ENCODE measurements at regions of chr4 and their contacts with region 1.

Region 1: DNA sequence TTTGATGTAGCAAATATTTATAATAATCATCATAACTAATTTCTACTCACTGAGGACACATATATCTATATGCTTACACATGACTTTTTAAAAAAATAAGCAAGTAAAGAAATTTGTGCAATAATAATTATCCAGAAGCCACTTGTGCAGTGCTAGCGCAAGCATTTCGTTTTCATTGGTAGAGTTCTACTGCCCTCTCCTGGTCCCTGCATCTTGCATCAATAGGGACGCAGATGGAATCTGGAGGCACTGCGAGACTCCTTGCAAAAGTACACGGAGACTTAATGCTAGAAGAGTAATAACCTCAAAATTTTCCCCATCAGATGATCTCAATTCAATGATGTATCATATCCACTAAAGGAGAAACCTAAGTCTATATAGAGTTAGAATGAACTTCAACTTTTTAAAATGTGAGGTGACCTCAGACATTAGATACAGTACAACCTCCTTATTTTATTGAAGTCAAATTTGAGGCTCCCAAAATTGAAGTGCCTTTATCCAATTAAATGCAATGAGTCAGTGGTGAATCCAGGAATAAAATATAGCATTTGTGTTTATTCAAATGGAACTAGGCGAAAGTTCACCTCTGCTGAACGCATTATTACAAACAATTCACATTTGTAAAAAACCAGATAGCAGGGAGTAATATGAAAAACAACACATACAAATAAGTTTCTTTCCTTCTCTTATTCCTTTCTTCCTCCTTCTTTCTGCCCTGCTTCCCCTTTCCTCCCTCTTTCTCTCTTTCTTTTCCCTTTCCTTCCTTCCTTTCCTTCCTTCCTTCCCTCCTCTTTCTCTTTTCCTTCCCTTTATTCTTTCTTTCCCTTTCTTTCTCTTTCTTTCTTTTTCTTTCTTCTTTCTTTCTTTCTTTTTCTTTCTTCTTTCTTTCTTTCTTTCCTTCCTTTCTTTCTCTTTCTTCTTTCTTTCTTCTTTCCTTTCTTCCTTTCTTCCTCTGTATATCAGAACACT is 450.0 kb downstream of the ANKRD50 start:
- DNase-seq: peak; percentile 56
- H3K4me3 ChIP-seq: no peak overlapping the region
- H3K27ac ChIP-seq: no peak overlapping the region
- H3K4me1 ChIP-seq: peaks cover 0 to 10% (median 0%) of the 10 kb centered on the region in 4 donors
- H3K27me3 ChIP-seq: no peaks in the 10 kb centered on the region
- CTCF ChIP-seq: peak; percentile 60 to 79 (median 78)
- EP300 ChIP-seq: no peak
- POLR2A ChIP-seq: no peak

Region 2: GRCh38 chr4:123096038-123096437 is 1166.5 kb before region 1 on chr4:
- in situ Hi-C with region 1: loop called in 2 of 4 experiments (anchors 25 kb)
- intact Hi-C with region 1: loop called (anchors 10 kb)
- DNase-seq: no peak
- H3K4me3 ChIP-seq: no peak overlapping the region
- H3K27ac ChIP-seq: no peak overlapping the region
- H3K4me1 ChIP-seq: no peaks in the 10 kb centered on the region
- H3K27me3 ChIP-seq: no peaks in the 10 kb centered on the region
- CTCF ChIP-seq: no peak
- EP300 ChIP-seq: no peak
- POLR2A ChIP-seq: no peak

Region 3: DNA sequence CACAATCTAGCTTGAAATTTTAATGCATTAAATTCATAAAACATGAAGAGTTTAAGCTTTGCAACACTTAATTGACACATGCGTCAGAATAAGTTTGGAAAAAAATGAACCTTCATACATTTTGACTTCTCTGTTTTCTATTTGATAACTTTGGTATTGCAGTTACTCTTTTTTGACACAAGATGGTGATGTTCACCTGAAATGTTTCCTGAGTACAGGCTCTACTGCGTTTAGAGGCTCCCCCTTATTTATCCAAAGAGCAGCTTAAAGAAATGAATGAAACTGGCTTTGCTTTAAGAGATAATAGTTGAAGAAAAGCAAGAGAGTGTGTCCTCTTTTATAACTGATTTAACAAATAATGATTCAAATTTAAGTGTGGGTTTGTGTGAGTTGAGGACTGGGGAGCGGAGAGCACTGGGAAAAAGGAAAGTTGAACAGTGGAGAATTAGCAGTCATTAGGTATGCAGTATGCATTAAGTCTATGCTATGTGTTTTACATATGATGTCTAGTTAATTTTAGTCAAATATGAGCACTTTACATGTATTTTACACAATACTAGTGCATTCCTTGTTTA is 1159.5 kb before region 1 on chr4:
- in situ Hi-C with region 1: loop called in 2 of 4 experiments (anchors 25 kb)
- intact Hi-C with region 1: loop called (anchors 10 kb)
- DNase-seq: no peak
- H3K4me3 ChIP-seq: no peak overlapping the region
- H3K27ac ChIP-seq: no peak overlapping the region
- H3K4me1 ChIP-seq: peaks cover 0 to 7% (median 2%) of the 10 kb centered on the region in 4 donors
- H3K27me3 ChIP-seq: no peaks in the 10 kb centered on the region
- CTCF ChIP-seq: peak; percentile 67 to 74 (median 74)
- EP300 ChIP-seq: no peak
- POLR2A ChIP-seq: no peak

Region 4: GRCh38 chr4:123350191-123350544 is 912.3 kb before region 1 on chr4:
- in situ Hi-C with region 1: loop called in 1 of 4 experiments (anchors 25 kb)
- intact Hi-C with region 1: no loop called
- DNase-seq: peak; percentile 36
- H3K4me3 ChIP-seq: no peak overlapping the region
- H3K27ac ChIP-seq: no peak overlapping the region
- H3K4me1 ChIP-seq: peaks cover 0 to 9% (median 0%) of the 10 kb centered on the region in 4 donors
- H3K27me3 ChIP-seq: no peaks in the 10 kb centered on the region
- CTCF ChIP-seq: peak in 1 of 5 experiments; percentile 27
- EP300 ChIP-seq: no peak
- POLR2A ChIP-seq: no peak

Region 5: DNA sequence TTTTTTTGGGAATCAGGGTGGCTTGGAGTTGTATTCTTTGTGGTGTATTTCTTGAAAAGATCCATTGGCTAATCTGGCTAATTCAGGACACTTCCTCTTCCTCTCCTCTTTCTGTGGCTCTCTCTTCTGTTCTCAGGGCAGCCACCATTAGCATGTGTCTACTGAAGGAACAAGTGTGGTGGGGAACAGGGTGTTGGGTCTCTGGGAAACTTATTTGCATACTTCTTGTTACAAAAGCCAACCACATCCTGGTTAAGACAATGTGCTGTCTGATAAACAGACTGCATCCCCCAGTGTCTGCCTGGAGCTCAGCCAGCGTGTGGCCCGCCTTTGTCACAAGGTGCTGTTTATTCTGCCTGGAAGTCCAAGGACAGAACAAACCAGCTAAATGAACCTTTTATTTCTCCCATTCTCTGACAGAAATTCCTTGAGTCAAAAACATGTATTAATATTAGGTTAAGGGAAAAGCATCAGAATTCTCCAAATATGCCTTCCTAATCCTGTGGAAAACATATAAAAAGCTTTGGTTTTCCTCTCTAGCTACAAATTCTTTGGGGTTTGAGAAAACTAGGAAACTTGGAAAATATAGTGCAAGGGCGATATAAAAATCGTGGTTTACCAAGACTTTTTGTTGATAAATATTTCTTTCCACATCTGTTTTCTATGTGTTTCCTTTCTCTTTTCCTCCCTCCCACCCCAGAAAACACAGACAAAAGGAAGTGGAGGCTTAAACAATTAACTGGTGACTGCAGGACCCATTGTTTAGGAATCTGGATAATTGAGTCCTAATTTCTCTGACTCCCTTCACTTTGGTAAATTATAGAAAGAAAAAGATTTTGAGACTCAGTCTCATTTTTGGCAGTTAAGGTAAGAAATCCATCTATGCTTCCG is 662.3 kb before region 1 on chr4:
- in situ Hi-C with region 1: no loop called
- intact Hi-C with region 1: no loop called
- DNase-seq: peak; percentile 82
- H3K4me3 ChIP-seq: no peak overlapping the region
- H3K27ac ChIP-seq: peak overlapping the region; percentile 65 to 79 (median 74)
- H3K4me1 ChIP-seq: peaks cover 18 to 58% (median 42%) of the 10 kb centered on the region in 4 donors
- H3K27me3 ChIP-seq: no peaks in the 10 kb centered on the region
- CTCF ChIP-seq: no peak
- EP300 ChIP-seq: no peak
- POLR2A ChIP-seq: no peak

Region 6: DNA sequence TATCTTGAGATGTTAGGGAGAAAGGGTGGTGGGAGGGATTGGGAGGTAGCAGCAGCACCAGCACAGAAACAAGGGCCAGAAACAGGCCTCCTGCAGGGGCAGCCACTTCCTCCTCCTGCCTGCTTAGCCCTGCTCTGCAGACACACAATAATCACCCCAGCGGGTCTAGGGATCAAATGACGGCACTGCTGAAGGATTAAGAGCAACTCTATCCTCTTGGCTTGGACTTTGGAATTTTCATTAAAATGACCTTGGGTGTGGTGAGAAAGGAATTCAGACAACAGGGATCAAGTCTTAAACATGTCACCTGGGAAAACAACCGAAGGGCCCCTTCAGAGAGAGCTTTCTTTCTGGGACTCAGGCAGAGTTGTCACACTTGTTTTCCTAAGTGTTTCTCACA is 512.5 kb before region 1 on chr4:
- in situ Hi-C with region 1: loop called in 2 of 4 experiments (anchors 25 kb)
- intact Hi-C with region 1: no loop called
- DNase-seq: no peak
- H3K4me3 ChIP-seq: no peak overlapping the region
- H3K27ac ChIP-seq: no peak overlapping the region
- H3K4me1 ChIP-seq: peaks cover 0 to 5% (median 3%) of the 10 kb centered on the region in 4 donors
- H3K27me3 ChIP-seq: no peaks in the 10 kb centered on the region
- CTCF ChIP-seq: no peak
- EP300 ChIP-seq: no peak
- POLR2A ChIP-seq: no peak